ENCODE measurements at regions of chr5 and their contacts with region 1.

Region 1: DNA sequence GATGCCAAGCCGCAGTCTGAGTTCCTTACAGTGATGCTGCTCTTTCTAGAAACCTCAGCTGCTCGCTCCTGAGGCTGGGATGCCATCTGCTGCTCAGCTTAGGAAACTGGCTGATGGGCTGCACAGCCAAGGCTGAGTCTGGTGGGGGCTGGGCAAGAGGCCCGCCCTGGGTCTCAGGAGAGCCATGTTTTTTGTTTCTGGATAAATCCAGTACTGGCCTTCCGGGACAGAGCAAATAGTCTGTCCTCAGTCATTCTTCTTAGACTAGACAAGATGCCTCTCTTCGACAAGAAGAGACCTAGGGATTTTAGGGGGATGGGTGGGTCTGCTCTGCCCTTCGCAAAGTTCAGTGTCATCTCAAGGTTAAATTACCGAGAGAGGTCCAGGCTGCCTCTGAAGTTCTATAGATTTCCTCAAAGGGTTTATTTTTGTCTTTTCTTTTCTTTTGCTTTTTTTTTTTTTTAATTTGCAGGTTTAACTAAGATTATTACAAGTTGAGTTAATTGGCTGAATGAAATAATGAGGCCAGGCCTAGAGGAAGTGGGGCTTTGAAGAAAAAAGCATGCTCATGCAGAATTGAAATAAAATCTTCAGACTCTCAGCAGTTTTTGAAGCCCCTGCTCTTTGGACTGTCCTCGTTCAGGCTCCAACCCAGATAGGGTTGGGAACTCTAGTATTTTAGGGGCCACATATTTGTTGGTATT is 30.6 kb upstream of the MATR3 start:
- DNase-seq: peak; percentile 77 to 85 (median 84)
- ATAC-seq: peak; percentile 98
- H3K4me3 ChIP-seq: no peak overlapping the region
- H3K4me1 ChIP-seq: no peaks in the 10 kb centered on the region
- CTCF ChIP-seq: peak; percentile 59

Region 2: GRCh38 chr5:138594305-138595058 is 668.4 kb before region 1 on chr5:
- intact Hi-C with region 1: loop called in 1 of 2 experiments (anchors 10 kb)
- DNase-seq: no peak
- ATAC-seq: no peak
- H3K4me3 ChIP-seq: no peak overlapping the region
- H3K4me1 ChIP-seq: no peaks in the 10 kb centered on the region
- CTCF ChIP-seq: no peak

Measured in mucosa of descending colon (tissue), 3 donors.